PC-9 (cell line): ENCODE measurements at regions of chr7 and their contacts with region 1.

Region 1: GRCh38 chr7:7959979-7960670 is 8.5 kb upstream of the GLCCI1 start:
- DNase-seq: no peak
- H3K4me3 ChIP-seq: no peak overlapping the region
- H3K27ac ChIP-seq: no peak overlapping the region
- H3K4me1 ChIP-seq: peaks cover 37% of the 10 kb centered on the region
- H3K27me3 ChIP-seq: no peaks in the 10 kb centered on the region
- CTCF ChIP-seq: no peak

Region 2: DNA sequence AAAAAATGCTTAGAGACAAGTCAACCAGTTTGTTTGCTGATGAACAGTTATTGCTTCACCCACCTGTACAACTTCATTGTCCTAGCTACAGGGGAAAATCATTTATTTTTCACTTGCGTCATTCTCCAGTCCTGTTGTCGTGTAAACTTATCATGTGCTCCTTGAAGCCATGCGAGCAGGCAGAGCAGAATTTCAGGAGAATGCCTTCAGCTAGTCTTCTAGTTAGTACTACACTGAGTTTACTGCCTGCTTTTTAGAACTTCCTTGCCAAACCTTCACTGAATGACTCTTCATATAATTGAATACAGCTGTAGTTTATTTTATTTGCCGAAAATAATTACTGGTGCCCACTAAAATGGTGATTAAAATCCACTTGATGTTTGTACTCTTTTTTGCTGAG is 257.3 kb before region 1 on chr7:
- CTCF ChIA-PET with region 1: no interaction called
- POLR2A ChIA-PET with region 1: no interaction called
- intact Hi-C with region 1: no loop called
- DNase-seq: no peak
- H3K4me3 ChIP-seq: no peak overlapping the region
- H3K27ac ChIP-seq: no peak overlapping the region
- H3K4me1 ChIP-seq: no peaks in the 10 kb centered on the region
- H3K27me3 ChIP-seq: no peaks in the 10 kb centered on the region
- CTCF ChIP-seq: no peak

Region 3: DNA sequence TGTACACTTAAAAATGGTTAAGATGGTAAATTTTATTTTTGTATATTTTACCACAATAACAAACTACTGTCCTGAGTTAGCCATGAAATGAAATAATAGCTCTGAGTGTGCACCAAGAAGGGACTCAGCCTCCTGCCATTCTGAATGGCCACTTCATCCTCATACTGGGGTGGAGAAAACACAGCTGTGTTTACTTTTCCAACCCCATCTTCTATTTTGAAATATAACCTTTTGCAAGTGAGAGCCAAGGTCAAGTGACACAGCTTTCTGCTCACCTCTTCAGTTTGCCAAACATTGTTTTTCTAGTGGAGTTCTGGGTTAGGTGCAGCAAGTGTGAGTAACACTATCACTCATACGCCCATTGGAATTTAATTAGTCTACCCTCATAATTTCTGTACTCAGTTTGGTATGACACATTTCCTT is 98.9 kb before region 1 on chr7:
- CTCF ChIA-PET with region 1: no interaction called
- POLR2A ChIA-PET with region 1: no interaction called
- intact Hi-C with region 1: no loop called
- DNase-seq: peak; percentile 35 to 93
- H3K4me3 ChIP-seq: no peak overlapping the region
- H3K27ac ChIP-seq: peak overlapping the region; percentile 43
- H3K4me1 ChIP-seq: peaks cover 37% of the 10 kb centered on the region
- H3K27me3 ChIP-seq: no peaks in the 10 kb centered on the region
- CTCF ChIP-seq: no peak

Region 4: DNA sequence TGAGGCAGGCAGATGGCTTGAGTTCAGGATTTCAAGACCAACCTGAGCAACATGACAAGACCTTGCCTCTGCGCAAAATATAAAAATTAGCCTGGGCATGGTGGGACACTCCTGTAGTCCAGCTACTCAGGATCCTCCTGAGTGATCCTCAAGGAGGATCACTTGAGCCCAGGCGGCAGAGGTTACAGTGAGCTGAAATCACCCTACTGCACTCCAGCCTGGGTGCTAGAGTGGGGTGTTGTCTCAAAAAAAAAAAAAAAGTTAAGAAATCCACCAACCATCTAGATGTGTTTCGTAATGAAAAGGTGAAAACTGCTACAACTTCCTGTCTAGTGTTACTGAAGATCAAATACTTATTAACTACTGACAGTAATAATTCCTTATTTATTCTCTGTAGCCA is 16.6 kb after region 1 on chr7:
- CTCF ChIA-PET with region 1: no interaction called
- POLR2A ChIA-PET with region 1: interaction called, 23 read pairs
- intact Hi-C with region 1: no loop called
- DNase-seq: no peak
- H3K4me3 ChIP-seq: no peak overlapping the region
- H3K27ac ChIP-seq: no peak overlapping the region
- H3K4me1 ChIP-seq: peaks cover 25% of the 10 kb centered on the region
- H3K27me3 ChIP-seq: no peaks in the 10 kb centered on the region
- CTCF ChIP-seq: no peak

Region 5: GRCh38 chr7:8751557-8752231 is 791.6 kb after region 1 on chr7:
- CTCF ChIA-PET with region 1: no interaction called
- POLR2A ChIA-PET with region 1: interaction called, 11 read pairs
- intact Hi-C with region 1: no loop called
- DNase-seq: no peak
- H3K4me3 ChIP-seq: no peak overlapping the region
- H3K27ac ChIP-seq: no peak overlapping the region
- H3K4me1 ChIP-seq: no peaks in the 10 kb centered on the region
- H3K27me3 ChIP-seq: peaks cover 4% of the 10 kb centered on the region; the same call in 1 of the 2 replicates
- CTCF ChIP-seq: no peak